GM12878 (cell line): ENCODE measurements at regions of chr1 and their contacts with region 1.

Region 1: DNA sequence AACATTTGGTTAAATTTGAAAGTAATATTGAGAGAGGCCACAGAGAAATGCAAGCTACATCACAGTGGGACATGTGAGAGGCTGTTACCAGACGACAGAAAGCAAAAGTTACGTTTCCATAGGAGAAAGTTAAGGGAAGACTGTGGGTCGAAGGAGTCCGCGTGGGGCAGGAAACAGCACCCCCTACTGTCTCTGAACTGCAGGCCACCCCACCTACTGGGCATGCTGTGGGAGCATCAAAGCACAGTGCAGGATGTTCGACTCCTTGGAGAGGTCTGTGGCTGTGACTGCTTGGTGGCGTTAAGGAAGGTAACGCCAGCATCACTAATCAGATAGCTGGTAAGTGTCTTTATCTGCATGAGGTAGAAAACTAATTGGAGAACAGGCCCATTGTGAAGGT is 123.9 kb downstream of the PTBP2 start:
- DNase-seq: no peak
- ATAC-seq: peak; percentile 97
- H3K4me3 ChIP-seq: no peak overlapping the region
- H3K27ac ChIP-seq: no peak overlapping the region
- H3K4me1 ChIP-seq: no peaks in the 10 kb centered on the region
- H3K27me3 ChIP-seq: no peaks in the 10 kb centered on the region
- CTCF ChIP-seq: peak; percentile 78 to 79 (median 79)
- EP300 ChIP-seq: no peak
- POLR2A ChIP-seq: no peak
- RAD21 ChIP-seq: peak; percentile 74

Region 2: GRCh38 chr1:96236156-96236739 is 609.2 kb before region 1 on chr1:
- CTCF ChIA-PET with region 1: interaction called, 22 read pairs
- POLR2A ChIA-PET with region 1: no interaction called
- RAD21 ChIA-PET with region 1: no interaction called
- SMC1A ChIA-PET with region 1: interaction called, 5 read pairs
- in situ Hi-C with region 1: loop called (anchors 5 kb)
- intact Hi-C with region 1: loop called (anchors 1 kb)
- DNase-seq: no peak
- ATAC-seq: peak; percentile 48; the same call in 1 of the 3 replicates
- H3K4me3 ChIP-seq: no peak overlapping the region
- H3K27ac ChIP-seq: no peak overlapping the region
- H3K4me1 ChIP-seq: no peaks in the 10 kb centered on the region
- H3K27me3 ChIP-seq: no peaks in the 10 kb centered on the region
- CTCF ChIP-seq: peak; percentile 29 to 52 (median 47); a peak in 5 of 6 replicates
- EP300 ChIP-seq: no peak
- POLR2A ChIP-seq: no peak
- RAD21 ChIP-seq: peak; percentile 64

Region 3: GRCh38 chr1:96746440-96747420 is 98.7 kb before region 1 on chr1:
- CTCF ChIA-PET with region 1: no interaction called
- POLR2A ChIA-PET with region 1: no interaction called
- RAD21 ChIA-PET with region 1: no interaction called
- SMC1A ChIA-PET with region 1: no interaction called
- in situ Hi-C with region 1: no loop called
- intact Hi-C with region 1: no loop called
- DNase-seq: no peak
- ATAC-seq: no peak
- H3K4me3 ChIP-seq: no peak overlapping the region
- H3K27ac ChIP-seq: no peak overlapping the region
- H3K4me1 ChIP-seq: no peaks in the 10 kb centered on the region
- H3K27me3 ChIP-seq: no peaks in the 10 kb centered on the region
- CTCF ChIP-seq: no peak
- EP300 ChIP-seq: no peak
- POLR2A ChIP-seq: no peak
- RAD21 ChIP-seq: no peak